GM12878 (cell line): ENCODE measurements at regions of chr14 and their contacts with region 1.

Region 1: GRCh38 chr14:69129264-69129880 is 23.5 kb downstream of the DCAF5 start:
- DNase-seq: no peak
- ATAC-seq: peak; percentile 97
- H3K4me3 ChIP-seq: no peak overlapping the region
- H3K27ac ChIP-seq: no peak overlapping the region
- H3K4me1 ChIP-seq: peaks cover 8% of the 10 kb centered on the region; the same call in 1 of the 2 replicates
- H3K27me3 ChIP-seq: no peaks in the 10 kb centered on the region
- CTCF ChIP-seq: peak; percentile 91 to 98 (median 93)
- EP300 ChIP-seq: no peak
- POLR2A ChIP-seq: no peak
- RAD21 ChIP-seq: peak; percentile 92

Region 2: DNA sequence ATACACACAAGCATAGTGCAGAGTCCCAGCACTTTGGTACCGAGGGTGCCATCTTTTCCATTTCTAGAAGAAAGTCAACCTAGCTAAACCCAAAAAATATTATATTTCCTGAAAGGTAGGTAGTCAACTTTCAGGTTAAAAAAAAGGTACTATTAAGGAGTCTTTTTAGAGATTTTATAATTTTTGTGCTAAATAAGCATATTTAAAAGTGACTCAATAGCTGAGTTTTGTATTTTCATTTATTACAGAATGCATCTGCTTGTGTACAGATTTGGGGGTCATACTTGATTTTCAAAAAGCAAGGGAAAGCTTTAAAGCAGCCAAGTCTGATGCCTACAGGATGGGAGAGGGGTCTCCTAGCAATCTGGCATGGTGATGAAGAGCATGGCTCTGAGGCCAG is 11.1 kb before region 1 on chr14:
- CTCF ChIA-PET with region 1: interaction called, 13 read pairs
- POLR2A ChIA-PET with region 1: no interaction called
- RAD21 ChIA-PET with region 1: no interaction called
- SMC1A ChIA-PET with region 1: interaction called, 5 read pairs
- in situ Hi-C with region 1: no loop called
- intact Hi-C with region 1: no loop called
- DNase-seq: no peak
- ATAC-seq: no peak
- H3K4me3 ChIP-seq: no peak overlapping the region
- H3K27ac ChIP-seq: no peak overlapping the region
- H3K4me1 ChIP-seq: no peaks in the 10 kb centered on the region
- H3K27me3 ChIP-seq: no peaks in the 10 kb centered on the region
- CTCF ChIP-seq: no peak
- EP300 ChIP-seq: no peak
- POLR2A ChIP-seq: no peak
- RAD21 ChIP-seq: no peak

Region 3: GRCh38 chr14:69191340-69192111 is 62.2 kb after region 1 on chr14 and contains the start of gene EXD2:
- CTCF ChIA-PET with region 1: interaction called, 15 read pairs
- POLR2A ChIA-PET with region 1: no interaction called
- RAD21 ChIA-PET with region 1: no interaction called
- SMC1A ChIA-PET with region 1: no interaction called
- in situ Hi-C with region 1: no loop called
- intact Hi-C with region 1: no loop called
- DNase-seq: peak; percentile 61
- ATAC-seq: peak; percentile 96
- H3K4me3 ChIP-seq: peak within 1 kb of the TSS; percentile 80
- H3K27ac ChIP-seq: peak within 1 kb of the TSS; percentile 53
- H3K4me1 ChIP-seq: no peaks in the 10 kb centered on the region
- H3K27me3 ChIP-seq: no peaks in the 10 kb centered on the region
- CTCF ChIP-seq: no peak
- EP300 ChIP-seq: no peak
- POLR2A ChIP-seq: peak; percentile 66
- RAD21 ChIP-seq: no peak
- polyA plus RNA-seq, gene EXD2: 1.0 to 1.3 TPM

Region 4: DNA sequence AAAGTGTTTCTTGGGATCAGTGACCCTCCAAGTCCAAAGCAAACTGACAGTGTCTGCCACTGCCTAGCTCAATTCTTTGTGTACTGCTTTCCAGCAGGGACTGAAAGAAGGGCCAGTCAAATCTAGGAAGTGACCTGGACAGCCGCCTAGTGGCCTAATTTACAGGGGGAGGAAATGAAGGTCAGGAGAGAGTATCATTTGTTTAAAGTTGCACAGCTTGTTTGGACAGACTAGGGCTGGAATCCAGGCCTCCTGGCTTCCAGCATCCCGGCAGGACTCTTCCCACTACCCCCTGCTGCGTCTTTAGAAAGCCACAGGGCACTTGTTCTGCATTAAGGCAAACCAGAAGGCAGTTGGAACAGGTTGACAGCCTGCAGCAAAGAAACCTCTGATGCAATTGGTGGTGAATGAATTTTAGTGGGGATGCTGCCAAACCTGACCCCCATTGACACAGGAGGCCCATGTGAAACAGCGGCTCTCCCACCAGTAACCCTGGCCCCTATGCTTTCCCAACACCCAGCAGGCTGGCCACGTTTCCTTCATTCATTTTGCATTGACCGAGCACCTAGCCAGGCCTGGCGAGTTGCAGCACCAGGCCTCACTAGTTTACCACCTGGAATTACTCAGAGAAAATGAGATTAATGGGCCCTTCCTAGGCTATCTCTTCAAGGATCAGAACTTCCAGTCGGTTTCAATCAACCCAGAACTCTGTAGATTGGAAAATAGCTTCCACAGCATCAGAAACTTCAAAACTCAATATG is 158.8 kb after region 1 on chr14:
- CTCF ChIA-PET with region 1: no interaction called
- POLR2A ChIA-PET with region 1: no interaction called
- RAD21 ChIA-PET with region 1: no interaction called
- SMC1A ChIA-PET with region 1: no interaction called
- in situ Hi-C with region 1: no loop called
- intact Hi-C with region 1: no loop called
- DNase-seq: no peak
- ATAC-seq: peak; percentile 49; the same call in 2 of the 3 replicates
- H3K4me3 ChIP-seq: no peak overlapping the region
- H3K27ac ChIP-seq: no peak overlapping the region
- H3K4me1 ChIP-seq: no peaks in the 10 kb centered on the region
- H3K27me3 ChIP-seq: no peaks in the 10 kb centered on the region
- CTCF ChIP-seq: peak in 1 of 3 experiments; percentile 8; a peak in 1 of 6 replicates
- EP300 ChIP-seq: no peak
- POLR2A ChIP-seq: no peak
- RAD21 ChIP-seq: no peak